ENCODE measurements at regions of chr18 and their contacts with region 1.

Region 1: GRCh38 chr18:70598406-70598805 is 309.6 kb downstream of the SOCS6 start:
- H3K4me3 ChIP-seq: no peak overlapping the region
- H3K27ac ChIP-seq: no peak overlapping the region
- H3K4me1 ChIP-seq: no peaks in the 10 kb centered on the region
- CTCF ChIP-seq: no peak

Region 2: GRCh38 chr18:70582981-70583380 is 15.4 kb before region 1 on chr18:
- CTCF ChIA-PET with region 1: interaction called, 12 read pairs
- POLR2A ChIA-PET with region 1: no interaction called
- H3K4me3 ChIP-seq: no peak overlapping the region
- H3K27ac ChIP-seq: no peak overlapping the region
- H3K4me1 ChIP-seq: no peaks in the 10 kb centered on the region
- CTCF ChIP-seq: no peak

Region 3: GRCh38 chr18:70641156-70641775 is 42.9 kb after region 1 on chr18:
- CTCF ChIA-PET with region 1: no interaction called
- POLR2A ChIA-PET with region 1: no interaction called
- H3K4me3 ChIP-seq: no peak overlapping the region
- H3K27ac ChIP-seq: no peak overlapping the region
- H3K4me1 ChIP-seq: no peaks in the 10 kb centered on the region
- CTCF ChIP-seq: no peak